Esophagus squamous epithelium (tissue), 5 donors: ENCODE measurements at regions of chr12 and their contacts with region 1.

Region 1: DNA sequence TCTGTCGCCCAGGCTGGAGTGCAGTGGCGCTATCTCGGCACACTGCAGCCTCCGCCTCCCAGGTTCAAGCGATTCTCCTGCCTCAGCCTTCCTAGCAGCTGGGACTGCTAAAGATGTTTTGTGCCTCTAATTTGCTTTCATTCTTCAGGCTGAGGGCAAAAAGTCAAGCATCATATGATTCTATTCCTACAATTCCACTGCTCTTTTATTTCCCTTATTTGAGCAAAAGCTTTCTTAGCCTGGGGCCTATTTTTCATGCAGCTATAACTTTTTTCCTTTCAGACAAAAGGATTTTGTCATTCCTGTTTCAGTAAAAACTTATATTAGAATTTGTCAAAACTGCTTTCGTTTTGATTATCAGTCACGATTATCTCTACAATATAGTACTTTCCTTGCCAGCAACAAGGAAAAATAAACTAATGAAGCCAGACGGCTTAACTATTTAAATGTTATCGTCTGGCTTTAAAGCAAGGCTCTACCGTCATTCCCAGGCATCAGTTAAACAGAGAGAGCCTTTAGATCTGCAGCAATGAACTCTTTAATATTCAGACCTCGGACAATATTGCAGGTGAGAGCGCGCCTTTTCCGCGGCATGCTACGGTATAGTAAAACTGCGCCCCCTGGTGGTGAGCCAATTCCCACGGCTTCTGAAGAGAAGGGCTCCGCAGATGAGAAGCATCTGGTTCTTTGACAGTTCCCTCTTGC is 1.4 kb upstream of the SLC2A13 start:
- DNase-seq: peak; percentile 49
- H3K4me3 ChIP-seq: peak overlapping the region; percentile 68 to 96 (median 92)
- H3K27ac ChIP-seq: peak overlapping the region in 3 of 4 donors; percentile 70 to 92 (median 85)
- H3K4me1 ChIP-seq: peaks cover 14 to 38% (median 19%) of the 10 kb centered on the region in 3 donors
- H3K27me3 ChIP-seq: no peaks in the 10 kb centered on the region
- CTCF ChIP-seq: peak; percentile 88 to 97 (median 94)
- POLR2A ChIP-seq: no peak

Region 2: GRCh38 chr12:39764944-39765560 is 342.2 kb before region 1 on chr12:
- intact Hi-C with region 1: loop called (anchors 10 kb)
- DNase-seq: no peak
- H3K4me3 ChIP-seq: no peak overlapping the region
- H3K27ac ChIP-seq: no peak overlapping the region
- H3K4me1 ChIP-seq: no peaks in the 10 kb centered on the region
- H3K27me3 ChIP-seq: no peaks in the 10 kb centered on the region
- CTCF ChIP-seq: peak; percentile 44 to 84 (median 70)
- POLR2A ChIP-seq: no peak

Region 3: DNA sequence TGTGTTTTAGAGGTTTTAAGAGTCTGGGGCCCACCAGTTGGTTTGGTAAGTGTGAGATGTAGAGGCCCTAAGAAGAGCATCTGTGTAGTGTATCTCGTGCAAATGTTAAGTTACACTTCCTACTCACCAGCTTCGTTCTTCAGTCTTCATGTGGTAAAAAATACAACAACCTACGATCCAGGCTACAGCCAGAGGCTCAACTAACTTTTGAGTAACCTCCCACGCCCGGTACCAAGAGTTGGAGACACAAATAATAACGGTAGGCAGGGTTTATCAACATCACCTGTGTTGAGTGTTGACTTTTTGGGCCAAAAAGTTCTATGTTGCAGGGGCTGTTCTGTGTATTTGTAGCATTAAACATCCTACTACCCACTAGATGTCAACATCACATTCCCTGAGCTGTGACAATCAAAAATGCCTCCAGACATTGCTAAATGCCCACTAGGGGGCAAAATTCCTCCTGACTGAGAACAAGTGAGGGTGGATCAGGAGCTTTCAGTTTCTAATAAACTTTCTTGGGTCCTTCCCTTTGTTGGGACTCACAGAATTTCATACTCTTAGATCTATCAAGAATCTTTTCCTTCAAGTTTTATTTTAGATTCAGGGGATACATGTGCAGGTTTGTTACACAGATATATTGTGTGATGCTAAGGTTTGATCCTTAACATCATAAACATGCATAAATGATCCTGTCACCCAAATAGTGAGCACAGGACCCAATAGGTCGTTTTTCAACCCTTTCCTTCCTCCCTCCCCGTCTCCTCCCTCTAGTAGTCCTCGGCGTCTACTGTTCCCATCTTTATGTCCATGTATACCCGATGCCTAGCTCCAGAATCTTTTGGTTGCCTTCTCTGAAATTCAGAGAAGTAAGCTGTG is 96.1 kb before region 1 on chr12:
- intact Hi-C with region 1: loop called (anchors 5 kb)
- DNase-seq: no peak
- H3K4me3 ChIP-seq: peak overlapping the region in 3 of 4 donors; percentile 13 to 47 (median 15)
- H3K27ac ChIP-seq: no peak overlapping the region
- H3K4me1 ChIP-seq: peaks cover 0 to 7% (median 0%) of the 10 kb centered on the region in 3 donors
- H3K27me3 ChIP-seq: no peaks in the 10 kb centered on the region
- CTCF ChIP-seq: peak; percentile 32 to 77 (median 70)
- POLR2A ChIP-seq: no peak